HepG2 (cell line): ENCODE measurements at regions of chr2 and their contacts with region 1.

Region 1: GRCh38 chr2:219451276-219452093 is 16.8 kb downstream of the SPEG start:
- DNase-seq: no peak
- ATAC-seq: no peak
- H3K4me3 ChIP-seq: no peak overlapping the region
- H3K27ac ChIP-seq: no peak overlapping the region
- H3K4me1 ChIP-seq: no peaks in the 10 kb centered on the region
- H3K27me3 ChIP-seq: peaks cover 43 to 91% of the 10 kb centered on the region in 2 experiments
- CTCF ChIP-seq: no peak
- EP300 ChIP-seq: no peak
- POLR2A ChIP-seq: no peak
- RAD21 ChIP-seq: no peak

Region 2: DNA sequence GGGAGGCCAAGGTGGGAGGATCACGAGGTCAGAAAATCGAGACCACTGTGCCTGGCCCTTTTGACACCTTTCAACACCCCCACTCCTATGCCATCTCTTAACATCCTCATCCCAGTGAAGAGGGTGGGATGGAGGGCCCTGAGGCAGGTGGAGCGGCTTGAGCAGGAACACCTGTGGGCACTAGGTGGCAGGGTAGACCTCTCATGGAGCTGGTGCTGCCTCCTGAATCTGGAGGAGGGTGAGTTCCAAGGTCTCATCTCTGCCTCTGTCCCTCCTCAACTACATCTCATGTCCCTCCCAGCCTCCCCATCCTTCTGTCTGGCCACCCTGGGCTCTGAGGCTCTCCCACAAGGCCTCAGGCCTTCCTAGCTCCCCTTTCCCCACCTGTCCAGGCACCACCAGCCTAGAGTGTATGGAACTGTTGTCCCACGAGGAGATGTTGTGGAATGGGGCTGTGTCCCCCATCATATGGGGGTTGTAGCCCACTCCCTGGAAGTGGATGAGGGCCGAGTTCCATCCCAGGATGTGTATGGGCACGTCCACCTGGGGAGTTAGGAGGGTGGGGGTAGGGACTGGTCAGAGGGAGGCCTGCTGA is 441.2 kb before region 1 on chr2:
- CTCF ChIA-PET with region 1: no interaction called
- POLR2A ChIA-PET with region 1: no interaction called
- in situ Hi-C with region 1: no loop called
- intact Hi-C with region 1: no loop called
- DNase-seq: peak; percentile 37
- ATAC-seq: peak; percentile 95
- H3K4me3 ChIP-seq: no peak overlapping the region
- H3K27ac ChIP-seq: no peak overlapping the region
- H3K4me1 ChIP-seq: peaks cover 7% of the 10 kb centered on the region; the same call in 1 of the 2 replicates
- H3K27me3 ChIP-seq: peaks cover 16 to 51% of the 10 kb centered on the region in 2 experiments
- CTCF ChIP-seq: peak; percentile 84
- EP300 ChIP-seq: no peak
- POLR2A ChIP-seq: no peak
- RAD21 ChIP-seq: 0 out of 2 replicates have a peak, but pooled peaks have one; percentile 59

Region 3: GRCh38 chr2:219218732-219219701 is 232.5 kb before region 1 on chr2 and contains the start of gene ABCB6:
- CTCF ChIA-PET with region 1: no interaction called
- POLR2A ChIA-PET with region 1: no interaction called
- in situ Hi-C with region 1: no loop called
- intact Hi-C with region 1: no loop called
- DNase-seq: peak; percentile 93
- ATAC-seq: peak; percentile 79
- H3K4me3 ChIP-seq: peak within 1 kb of the TSS; percentile 80 to 92 (median 85)
- H3K27ac ChIP-seq: peak within 1 kb of the TSS; percentile 92
- H3K4me1 ChIP-seq: peaks cover 43% of the 10 kb centered on the region
- H3K27me3 ChIP-seq: no peaks in the 10 kb centered on the region
- CTCF ChIP-seq: 0 out of 2 replicates have a peak, but pooled peaks have one; percentile 20
- EP300 ChIP-seq: no peak; a peak in 1 of 4 replicates
- POLR2A ChIP-seq: peak in 1 of 2 experiments; percentile 94; a peak in 2 of 4 replicates
- RAD21 ChIP-seq: no peak
- total RNA-seq, gene ABCB6: 51.3 and 137 TPM in 2 replicates

Region 4: GRCh38 chr2:219410390-219410789 is 41.1 kb before region 1 on chr2:
- CTCF ChIA-PET with region 1: no interaction called
- POLR2A ChIA-PET with region 1: no interaction called
- in situ Hi-C with region 1: no loop called
- intact Hi-C with region 1: loop called (anchors 1 kb)
- DNase-seq: no peak
- ATAC-seq: peak; percentile 20; the same call in 2 of the 3 replicates
- H3K4me3 ChIP-seq: no peak overlapping the region
- H3K27ac ChIP-seq: no peak overlapping the region
- H3K4me1 ChIP-seq: peaks cover 16% of the 10 kb centered on the region
- H3K27me3 ChIP-seq: peaks cover 3 to 18% of the 10 kb centered on the region in 2 experiments; a peak in 3 of 5 replicates
- CTCF ChIP-seq: no peak
- EP300 ChIP-seq: no peak
- POLR2A ChIP-seq: no peak
- RAD21 ChIP-seq: no peak

Region 5: DNA sequence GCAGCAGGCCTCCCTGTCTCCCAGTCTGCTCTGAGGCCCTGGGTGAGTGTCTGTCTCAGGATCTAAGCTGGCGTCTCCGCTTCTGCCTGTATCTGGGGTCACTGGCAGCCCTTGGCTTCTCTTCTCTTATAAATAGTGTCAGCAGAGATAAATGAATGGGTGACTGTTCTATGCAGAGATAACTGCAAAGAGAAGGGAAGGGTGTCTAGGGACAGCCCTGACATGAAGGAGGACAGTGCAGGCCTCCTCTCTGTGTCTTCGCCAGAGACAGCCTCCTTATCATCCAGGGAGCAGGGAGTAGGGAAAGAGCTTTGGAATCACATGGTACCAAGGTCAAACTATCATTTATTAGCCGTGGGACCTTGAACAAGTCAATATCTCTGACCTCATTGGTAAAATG is 18.9 kb after region 1 on chr2:
- CTCF ChIA-PET with region 1: no interaction called
- POLR2A ChIA-PET with region 1: no interaction called
- in situ Hi-C with region 1: no loop called
- intact Hi-C with region 1: no loop called
- DNase-seq: no peak
- ATAC-seq: no peak
- H3K4me3 ChIP-seq: no peak overlapping the region
- H3K27ac ChIP-seq: no peak overlapping the region
- H3K4me1 ChIP-seq: no peaks in the 10 kb centered on the region
- H3K27me3 ChIP-seq: peaks cover 14 to 93% of the 10 kb centered on the region in 2 experiments; a peak in 4 of 5 replicates
- CTCF ChIP-seq: no peak
- EP300 ChIP-seq: no peak
- POLR2A ChIP-seq: no peak
- RAD21 ChIP-seq: no peak